Head of caudate nucleus (tissue), 42 donors: ENCODE measurements at regions of chrX and their contacts with region 1.

Region 1: GRCh38 chrX:74015379-74016019 is 288.5 kb upstream of the ZCCHC13 start:
- DNase-seq: peak in 41 of 42 donors; percentile 27 to 80 (median 61)

Region 2: DNA sequence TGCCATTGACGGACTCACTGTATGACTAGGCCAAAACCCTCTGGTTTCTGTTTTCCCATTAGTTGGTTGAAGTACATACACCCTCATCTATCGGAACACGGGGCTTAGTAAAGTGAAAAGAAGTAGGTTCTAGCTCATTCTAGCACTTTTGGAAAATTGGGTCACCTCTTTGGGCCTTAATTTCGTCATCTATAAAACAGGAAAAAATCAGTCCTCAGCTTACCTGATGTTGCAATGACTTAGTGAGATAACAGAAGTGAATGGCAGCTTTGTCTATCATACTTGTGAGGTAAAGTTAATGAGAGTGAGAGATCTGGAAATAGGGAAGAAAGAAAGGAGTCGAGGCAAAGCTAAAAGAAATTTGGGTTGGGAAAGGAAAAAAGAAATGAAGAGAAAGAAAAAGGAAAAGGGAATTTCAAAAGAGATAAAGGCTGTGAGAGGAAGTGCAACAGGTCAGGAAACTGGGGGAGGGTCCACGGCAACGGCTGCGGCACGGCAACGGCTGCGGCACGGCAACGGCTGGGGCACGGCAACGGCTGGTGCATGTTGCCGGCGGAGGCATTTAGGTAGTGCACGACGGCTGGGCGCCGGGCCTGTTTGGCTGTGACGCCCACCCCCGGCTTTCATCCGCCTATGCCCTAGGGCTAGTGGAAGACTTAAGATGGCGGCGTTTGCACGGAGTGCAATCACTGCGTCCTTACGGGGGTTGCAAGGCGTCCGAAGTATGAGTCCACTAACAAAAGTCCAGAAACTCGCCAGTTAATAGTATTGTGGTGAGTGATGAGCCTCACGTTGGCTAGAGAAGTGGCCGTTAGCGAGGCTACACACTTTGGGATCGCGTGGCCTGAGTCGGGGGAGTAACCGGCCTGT is 71.6 kb before region 1 on chrX:
- intact Hi-C with region 1: loop called (anchors 10 kb)
- DNase-seq: peak; percentile 62 to 96 (median 92)

Region 3: GRCh38 chrX:74119016-74119910 is 103.8 kb after region 1 on chrX:
- intact Hi-C with region 1: no loop called
- DNase-seq: no peak